ENCODE measurements at regions of chr1 and their contacts with region 1.

Region 1: DNA sequence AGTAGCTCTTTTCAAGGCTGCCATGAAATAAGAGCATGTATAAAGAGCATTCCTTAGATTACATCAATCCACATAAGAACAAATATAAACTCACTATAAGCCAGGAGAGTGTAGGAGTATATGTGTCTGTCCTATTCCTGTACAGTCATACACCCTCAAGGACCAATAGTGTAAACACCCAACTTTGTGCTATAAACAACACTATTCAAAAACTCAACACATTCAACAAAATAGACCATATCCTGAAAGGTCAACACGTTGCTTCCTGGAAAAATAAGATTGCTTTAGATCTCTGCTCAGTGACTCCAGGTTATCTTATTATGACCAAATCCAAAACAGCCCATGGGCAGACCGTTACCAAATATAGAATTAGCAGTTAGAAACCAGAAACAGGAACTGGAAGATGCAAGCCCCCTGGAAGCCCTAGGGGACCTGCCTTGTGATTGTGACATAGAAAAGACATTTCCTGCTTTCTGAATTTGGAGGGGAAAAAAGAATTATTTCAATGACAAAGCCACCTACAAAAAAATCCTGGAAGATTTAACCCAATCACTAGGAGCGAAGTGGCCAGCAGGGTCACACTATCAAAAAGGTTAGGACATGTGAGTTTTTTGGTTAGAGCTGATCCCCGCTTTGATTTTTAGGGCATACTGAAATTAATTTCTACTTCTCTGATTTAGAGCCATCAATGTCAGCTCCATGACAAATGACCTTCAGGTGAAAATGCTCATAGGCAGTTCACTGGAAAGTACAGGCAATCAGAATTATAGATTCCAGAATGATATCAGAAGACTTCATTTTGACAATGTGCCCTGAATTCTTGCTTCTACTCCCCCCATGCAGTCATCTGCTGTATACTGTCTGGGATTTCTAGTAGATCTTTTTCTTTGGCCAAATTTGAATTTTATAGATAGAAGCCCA is 59.9 kb downstream of the LRRC8C start:
- DNase-seq: no peak
- H3K4me3 ChIP-seq: no peak overlapping the region
- H3K4me3 Mint-ChIP-seq: peak overlapping the region in 5 of 8 donors; percentile 20 to 57 (median 43)
- H3K27ac ChIP-seq: no peak overlapping the region
- H3K27ac Mint-ChIP-seq: peak overlapping the region; percentile 72 to 88 (median 75)
- H3K4me1 ChIP-seq: peaks cover 70% of the 10 kb centered on the region
- H3K4me1 Mint-ChIP-seq: peaks cover 67 to 93% (median 79%) of the 10 kb centered on the region in 4 donors
- H3K27me3 ChIP-seq: no peaks in the 10 kb centered on the region
- H3K27me3 Mint-ChIP-seq: no peaks in the 10 kb centered on the region

Region 2: GRCh38 chr1:89675677-89676076 is 17.2 kb before region 1 on chr1:
- CTCF ChIA-PET with region 1: interaction called, 4 read pairs
- POLR2A ChIA-PET with region 1: interaction called, 3 read pairs
- intact Hi-C with region 1: loop called (anchors 2 kb)
- DNase-seq: no peak
- H3K4me3 ChIP-seq: no peak overlapping the region
- H3K4me3 Mint-ChIP-seq: peak overlapping the region in 4 of 8 donors; percentile 20 to 68 (median 36)
- H3K27ac ChIP-seq: no peak overlapping the region
- H3K27ac Mint-ChIP-seq: peak overlapping the region; percentile 36 to 86 (median 61)
- H3K4me1 ChIP-seq: peaks cover 67% of the 10 kb centered on the region
- H3K4me1 Mint-ChIP-seq: peaks cover 72 to 92% (median 82%) of the 10 kb centered on the region in 4 donors
- H3K27me3 ChIP-seq: no peaks in the 10 kb centered on the region
- H3K27me3 Mint-ChIP-seq: no peaks in the 10 kb centered on the region

Measured in CD4-positive, alpha-beta memory T cell (primary cell).